ENCODE measurements at regions of chr14 and their contacts with region 1.

Region 1: DNA sequence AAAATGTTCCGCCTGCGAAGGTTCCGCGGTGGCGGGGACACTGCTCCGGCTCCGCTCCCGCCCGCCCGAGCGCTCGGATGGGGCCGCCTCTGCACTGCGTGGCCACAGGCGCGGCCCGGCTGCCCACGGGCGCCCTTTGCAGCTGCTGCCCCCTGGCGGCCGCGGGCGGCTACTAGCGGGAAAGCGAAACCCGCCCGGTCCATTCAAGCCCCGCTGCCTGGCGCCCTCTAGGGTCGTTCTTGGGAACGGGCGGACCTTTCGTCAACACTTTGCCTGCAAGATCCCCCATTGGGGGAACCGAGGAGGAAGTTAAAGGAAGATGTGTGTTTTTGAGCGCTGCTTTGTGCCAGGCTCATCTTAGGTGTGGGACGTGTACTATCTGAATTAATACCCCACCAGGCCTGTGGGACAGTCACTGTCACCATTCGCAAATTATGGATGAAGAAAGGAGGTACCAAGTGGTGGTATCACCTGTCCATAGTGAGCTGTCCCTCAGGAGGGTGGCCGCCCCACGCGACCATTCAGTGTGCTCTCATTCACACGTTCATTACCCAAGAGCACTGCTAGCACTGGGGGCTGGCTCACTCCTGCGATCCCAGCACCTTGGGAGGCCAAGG is 19.4 kb downstream of the GPR132 start:
- DNase-seq: no peak
- H3K4me3 ChIP-seq: peak overlapping the region; percentile 10
- CTCF ChIP-seq: peak; percentile 99

Region 2: DNA sequence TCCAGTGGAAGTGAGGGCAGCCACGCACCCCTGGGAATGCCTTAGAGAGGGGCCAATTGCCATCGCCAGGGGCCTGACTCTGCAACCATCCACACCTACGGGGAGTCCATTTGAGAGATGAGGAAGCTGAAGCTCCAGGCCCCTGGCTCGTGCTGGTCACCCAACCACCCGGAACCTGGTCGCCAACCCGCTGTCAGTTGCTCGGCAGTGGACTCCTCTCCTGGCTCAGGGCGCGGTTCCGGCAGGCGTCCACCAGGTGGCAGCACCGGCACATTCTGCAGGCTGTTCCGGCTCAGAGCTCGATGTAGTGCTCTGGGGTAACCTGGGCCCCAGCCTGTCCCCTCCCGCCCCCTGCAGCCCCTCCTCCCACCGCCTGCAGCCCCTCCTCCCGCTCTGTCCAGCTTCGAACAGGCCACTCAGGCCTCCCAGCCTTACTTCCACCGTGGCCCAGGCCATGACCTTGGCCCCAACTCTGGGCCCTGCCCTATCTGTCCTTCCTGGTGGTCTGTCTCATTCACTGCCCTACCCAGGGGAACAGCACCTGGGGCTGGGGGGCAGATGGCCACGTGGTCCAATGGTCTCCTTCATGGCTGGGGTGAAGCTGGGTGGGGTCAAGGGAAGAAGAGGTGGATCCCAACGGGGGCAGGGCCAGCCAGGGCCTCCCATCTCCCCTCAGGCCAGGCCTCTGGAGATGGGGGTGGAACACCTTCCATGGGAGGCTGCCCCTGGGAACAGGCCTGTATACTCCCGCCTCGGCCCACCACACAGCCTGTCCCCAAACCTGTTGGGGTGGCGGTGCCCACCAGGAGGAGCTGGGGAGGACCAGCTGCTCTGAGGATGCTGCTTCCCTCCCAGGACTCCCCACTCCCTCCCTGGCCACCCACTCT is 277.1 kb before region 1 on chr14:
- CTCF ChIA-PET with region 1: interaction called, 15 read pairs
- POLR2A ChIA-PET with region 1: no interaction called
- DNase-seq: no peak
- H3K4me3 ChIP-seq: no peak overlapping the region
- CTCF ChIP-seq: peak; percentile 97

Region 3: GRCh38 chr14:104926619-104927431 is 119.0 kb before region 1 on chr14:
- CTCF ChIA-PET with region 1: interaction called, 15 read pairs
- POLR2A ChIA-PET with region 1: no interaction called
- DNase-seq: no peak
- H3K4me3 ChIP-seq: no peak overlapping the region
- CTCF ChIP-seq: no peak

Region 4: DNA sequence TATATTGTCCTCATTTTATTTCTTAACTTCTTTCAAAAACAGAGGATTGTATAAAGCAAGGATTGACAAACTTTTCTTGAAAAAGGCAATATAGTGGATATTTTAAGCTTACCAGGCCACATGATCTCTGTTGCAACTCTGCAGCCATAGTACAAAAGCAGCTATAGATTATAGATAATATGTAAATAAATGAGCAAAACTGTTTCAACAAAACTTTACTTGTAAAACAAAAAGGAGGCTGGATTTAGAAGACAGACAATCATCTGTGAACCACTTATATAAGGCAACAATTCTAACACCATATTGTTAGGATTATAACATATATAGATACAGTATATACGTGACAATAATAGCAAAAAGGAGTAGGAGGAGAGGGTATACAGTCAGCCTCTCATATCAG is 86.0 kb before region 1 on chr14:
- CTCF ChIA-PET with region 1: interaction called, 33 read pairs
- POLR2A ChIA-PET with region 1: no interaction called
- DNase-seq: no peak
- H3K4me3 ChIP-seq: no peak overlapping the region
- CTCF ChIP-seq: no peak

Region 5: GRCh38 chr14:104985675-104986525 is 59.9 kb before region 1 on chr14 and contains the start of gene CLBA1:
- CTCF ChIA-PET with region 1: interaction called, 37 read pairs
- POLR2A ChIA-PET with region 1: no interaction called
- DNase-seq: no peak
- H3K4me3 ChIP-seq: peak within 1 kb of the TSS; percentile 70
- CTCF ChIP-seq: no peak

Region 6: GRCh38 chr14:105020815-105021655 is 24.8 kb before region 1 on chr14 and contains the start of gene CDCA4:
- CTCF ChIA-PET with region 1: interaction called, 211 read pairs
- POLR2A ChIA-PET with region 1: interaction called, 4 read pairs
- DNase-seq: no peak
- H3K4me3 ChIP-seq: peak within 1 kb of the TSS; percentile 77
- CTCF ChIP-seq: no peak

Region 7: GRCh38 chr14:105075379-105076295 is 29.8 kb after region 1 on chr14:
- CTCF ChIA-PET with region 1: interaction called, 17 read pairs
- POLR2A ChIA-PET with region 1: no interaction called
- DNase-seq: no peak
- H3K4me3 ChIP-seq: no peak overlapping the region
- CTCF ChIP-seq: no peak

Measured in AG04449 (cell line).